Activated CD4-positive, alpha-beta T cell treated with anti-CD3 and anti-CD28 coated beads, Interleukin-2, amount 10 ng/mL, durations not matched to agents 24 days and 14 days (primary cell): ENCODE measurements at regions of chr11 and their contacts with region 1.

Region 1: GRCh38 chr11:85766721-85767161 is 44.2 kb downstream of the SYTL2 start:
- DNase-seq: no peak
- H3K4me3 Mint-ChIP-seq: no peak overlapping the region
- H3K27ac Mint-ChIP-seq: no peak overlapping the region
- H3K4me1 Mint-ChIP-seq: peaks cover 55% of the 10 kb centered on the region
- H3K27me3 Mint-ChIP-seq: no peaks in the 10 kb centered on the region

Region 2: GRCh38 chr11:85779956-85780640 is 13.4 kb after region 1 on chr11:
- intact Hi-C with region 1: loop called (anchors 2 kb)
- DNase-seq: no peak
- H3K4me3 Mint-ChIP-seq: no peak overlapping the region
- H3K27ac Mint-ChIP-seq: no peak overlapping the region
- H3K4me1 Mint-ChIP-seq: peaks cover 48% of the 10 kb centered on the region
- H3K27me3 Mint-ChIP-seq: no peaks in the 10 kb centered on the region

Region 3: DNA sequence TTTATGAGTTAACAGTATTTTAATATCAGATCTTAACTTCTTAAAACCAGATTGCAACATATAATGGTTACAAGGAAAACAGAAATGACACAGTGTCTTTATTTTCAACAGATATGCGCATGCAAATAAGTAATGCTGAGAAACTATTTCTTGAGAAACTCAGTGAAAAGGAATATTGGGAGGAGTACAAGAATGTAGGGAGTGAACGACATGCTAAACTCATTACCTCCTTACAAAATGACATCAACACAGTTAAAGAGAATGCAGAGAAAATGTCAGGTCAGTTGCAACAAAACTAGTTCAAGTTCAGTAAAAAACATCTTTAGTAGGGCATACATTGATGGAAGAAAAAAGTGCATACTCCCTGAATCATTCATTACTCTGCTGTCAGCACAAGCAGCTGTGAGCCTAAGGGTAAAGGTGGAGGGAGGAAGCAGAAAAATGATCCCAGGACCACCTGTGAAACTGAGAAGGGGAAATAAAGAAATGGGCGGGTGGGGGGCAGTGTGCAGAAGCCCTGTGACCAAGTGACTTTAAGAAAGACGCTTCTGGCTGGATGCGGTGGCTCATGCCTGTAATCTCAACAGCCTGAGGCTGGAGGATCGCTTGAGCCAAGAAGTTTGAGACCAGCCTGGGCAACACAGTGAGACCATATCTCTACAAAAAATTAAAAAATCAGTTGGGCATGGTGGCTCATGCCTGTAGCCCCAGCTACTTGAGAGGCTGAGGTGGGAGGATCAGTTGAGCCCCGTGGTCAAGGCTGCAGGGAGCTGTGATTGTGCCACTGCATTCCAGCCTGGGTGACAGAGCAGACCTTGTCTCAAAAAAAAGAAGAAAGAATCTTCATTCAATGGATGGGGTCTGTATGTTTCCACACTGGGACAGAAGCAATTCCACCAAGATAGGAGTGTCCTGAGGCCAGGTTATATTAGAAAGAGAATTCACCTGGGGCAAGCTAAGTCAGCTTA is 119.6 kb after region 1 on chr11:
- intact Hi-C with region 1: no loop called
- DNase-seq: no peak
- H3K4me3 Mint-ChIP-seq: no peak overlapping the region
- H3K27ac Mint-ChIP-seq: no peak overlapping the region
- H3K4me1 Mint-ChIP-seq: no peaks in the 10 kb centered on the region
- H3K27me3 Mint-ChIP-seq: peaks cover 10% of the 10 kb centered on the region